ENCODE measurements at regions of chr10 and their contacts with region 1.

Region 1: DNA sequence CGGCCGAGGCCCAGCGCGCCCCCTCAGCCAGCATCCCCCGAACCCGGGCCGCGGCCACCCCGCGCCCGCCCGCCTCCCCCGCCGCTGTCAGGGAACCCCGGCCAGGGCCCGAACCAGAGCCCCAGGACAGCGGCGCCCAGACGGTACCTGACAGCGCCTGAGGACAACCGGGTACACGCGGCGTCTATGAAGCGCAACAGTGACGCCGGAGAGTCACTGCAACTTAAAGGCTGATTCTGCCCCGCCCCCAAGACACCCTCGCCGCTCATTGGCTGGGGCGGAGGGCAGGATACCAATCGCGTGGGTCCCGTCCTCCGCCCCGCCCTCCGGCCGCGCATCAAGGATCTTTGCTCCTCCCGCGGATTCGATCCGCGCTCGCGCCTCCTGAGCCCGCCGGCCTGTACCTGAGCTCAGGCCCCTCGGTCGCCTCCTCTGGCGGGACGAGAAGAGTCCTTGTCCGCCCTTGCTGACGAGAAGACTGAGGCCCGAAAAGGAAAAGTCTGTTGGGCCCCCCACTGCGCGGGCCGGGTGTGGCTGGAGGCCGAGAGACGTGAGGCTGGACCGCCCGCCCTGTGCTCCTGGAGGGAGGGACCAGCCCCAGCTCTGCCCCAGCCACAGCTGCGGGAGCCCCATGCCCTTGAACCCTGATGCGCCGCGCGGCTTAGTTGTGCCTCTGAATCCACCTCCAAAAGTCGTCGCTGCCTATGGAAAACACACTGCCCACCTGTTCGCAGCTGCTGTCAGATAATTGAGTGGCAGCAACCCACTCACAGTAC is at the start of gene OAT:
- DNase-seq: peak; percentile 98
- ATAC-seq: peak; percentile 98
- total RNA-seq, gene OAT: 27.3 TPM

Region 2: GRCh38 chr10:124524969-124525653 is 106.2 kb after region 1 on chr10:
- intact Hi-C with region 1: loop called (anchors 1 kb)
- DNase-seq: peak; percentile 80
- ATAC-seq: peak; percentile 87

Measured in Right ventricle myocardium inferior (tissue), 1 donor.